Posterior cingulate gyrus (tissue), 11 donors: ENCODE measurements at regions of chr7 and their contacts with region 1.

Region 1: DNA sequence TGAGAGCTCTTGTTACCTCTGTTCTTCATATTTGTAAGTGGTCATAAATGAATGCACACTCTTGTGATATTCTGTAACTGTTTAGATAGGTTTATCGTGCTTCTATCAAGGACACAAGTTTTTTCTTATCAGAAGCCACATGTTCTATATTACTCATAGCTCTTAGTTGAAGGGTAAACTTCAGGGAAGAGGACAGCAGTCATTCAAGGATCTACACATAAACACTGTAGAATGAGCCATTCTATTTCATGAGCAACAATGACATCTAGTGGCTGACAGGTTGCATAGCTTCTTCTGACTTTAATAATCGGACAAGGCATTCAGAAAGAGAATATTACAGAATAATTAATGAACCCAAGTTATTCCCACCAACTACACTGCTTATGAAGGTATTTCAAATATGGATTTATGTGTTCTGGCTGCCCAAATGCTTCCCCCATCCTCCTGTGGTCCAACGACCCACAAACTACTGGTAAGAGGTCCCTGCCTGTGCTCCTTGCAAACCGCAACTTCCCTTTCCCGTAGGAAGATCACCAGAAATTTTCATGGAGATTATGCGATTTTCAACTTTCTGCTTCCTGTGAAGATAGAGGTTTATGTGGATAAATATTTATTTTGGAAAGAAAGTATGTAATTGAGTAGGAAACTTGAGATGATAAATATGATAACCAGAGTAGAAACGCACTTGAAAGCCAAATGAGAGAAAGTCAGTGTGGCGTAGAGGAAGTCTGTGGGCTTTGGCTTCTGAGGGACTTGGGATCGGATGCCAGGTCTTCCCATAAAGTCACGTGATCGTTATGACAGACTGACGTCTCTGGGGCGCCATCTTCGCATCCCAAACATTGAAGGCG is 16.8 kb upstream of the ABCB5 start:
- DNase-seq: no peak

Region 2: DNA sequence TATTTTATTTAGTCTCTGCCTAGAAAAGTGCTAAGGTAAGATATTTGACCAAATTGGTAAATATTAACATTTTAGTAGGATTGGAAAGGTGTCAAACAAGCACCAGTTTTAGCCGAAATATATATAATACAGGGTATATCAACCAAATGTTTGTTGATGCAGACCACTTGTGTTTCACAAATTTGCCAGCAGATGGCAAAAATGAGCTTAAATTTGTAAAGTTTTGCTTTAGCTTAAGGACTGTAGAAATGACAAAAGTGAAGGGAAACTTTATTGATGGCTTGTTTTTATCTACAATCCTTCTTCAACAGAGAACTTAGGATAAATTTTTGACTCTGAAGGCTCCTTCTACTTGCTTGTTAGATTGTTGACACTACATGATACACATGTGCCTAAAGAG is 885.0 kb before region 1 on chr7:
- intact Hi-C with region 1: loop called (anchors 1 kb)
- DNase-seq: peak in 3 of 10 donors; percentile 23 to 33 (median 25)

Region 3: DNA sequence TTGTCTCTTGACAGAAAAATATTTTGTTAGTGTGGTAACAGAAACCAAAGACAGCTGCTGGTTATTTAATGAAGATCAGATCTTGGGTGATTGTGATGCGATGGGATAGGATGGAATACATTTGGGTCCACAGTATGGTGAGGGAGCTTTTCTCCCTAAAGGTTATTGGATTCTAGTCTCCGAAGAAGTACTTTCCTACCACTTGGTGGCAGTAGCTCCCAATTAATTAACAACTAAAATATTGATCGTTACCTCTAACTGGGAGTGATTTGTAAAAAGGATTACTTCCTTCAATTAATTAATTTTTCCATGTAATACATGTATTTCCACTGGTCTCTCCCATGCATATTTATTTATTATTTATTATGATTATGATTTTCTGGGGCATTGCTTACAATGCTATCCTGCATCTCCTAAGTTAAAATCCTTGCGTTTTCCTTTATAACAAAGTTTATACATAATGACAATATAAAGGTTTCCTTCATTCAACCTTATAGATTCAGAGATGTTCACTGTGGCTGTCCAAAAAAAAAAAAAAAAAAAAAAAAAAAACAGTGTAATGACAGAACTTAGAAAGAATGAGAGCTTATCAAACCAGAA is 850.8 kb before region 1 on chr7:
- intact Hi-C with region 1: loop called (anchors 2 kb)
- DNase-seq: no peak

Region 4: GRCh38 chr7:20158684-20159083 is 440.0 kb before region 1 on chr7:
- intact Hi-C with region 1: loop called (anchors 1 kb)
- DNase-seq: no peak

Region 5: GRCh38 chr7:20330240-20330927 is 268.3 kb before region 1 on chr7 and contains the start of gene ITGB8:
- intact Hi-C with region 1: loop called (anchors 10 kb)
- DNase-seq: peak; percentile 77 to 98 (median 90)